Activated CD4-positive, alpha-beta T cell treated with anti-CD3 and anti-CD28 coated beads, Interleukin-2, amount 10 ng/mL, durations not matched to agents 7 days and 5 days (primary cell): ENCODE measurements at regions of chr12 and their contacts with region 1.

Region 1: GRCh38 chr12:65156366-65156841 is 13.0 kb upstream of the LEMD3 start:
- DNase-seq: peak; percentile 29
- H3K4me3 Mint-ChIP-seq: peak overlapping the region; percentile 48
- H3K27ac Mint-ChIP-seq: peak overlapping the region; percentile 86
- H3K4me1 Mint-ChIP-seq: peaks cover 20% of the 10 kb centered on the region
- H3K27me3 Mint-ChIP-seq: peaks cover 24% of the 10 kb centered on the region

Region 2: DNA sequence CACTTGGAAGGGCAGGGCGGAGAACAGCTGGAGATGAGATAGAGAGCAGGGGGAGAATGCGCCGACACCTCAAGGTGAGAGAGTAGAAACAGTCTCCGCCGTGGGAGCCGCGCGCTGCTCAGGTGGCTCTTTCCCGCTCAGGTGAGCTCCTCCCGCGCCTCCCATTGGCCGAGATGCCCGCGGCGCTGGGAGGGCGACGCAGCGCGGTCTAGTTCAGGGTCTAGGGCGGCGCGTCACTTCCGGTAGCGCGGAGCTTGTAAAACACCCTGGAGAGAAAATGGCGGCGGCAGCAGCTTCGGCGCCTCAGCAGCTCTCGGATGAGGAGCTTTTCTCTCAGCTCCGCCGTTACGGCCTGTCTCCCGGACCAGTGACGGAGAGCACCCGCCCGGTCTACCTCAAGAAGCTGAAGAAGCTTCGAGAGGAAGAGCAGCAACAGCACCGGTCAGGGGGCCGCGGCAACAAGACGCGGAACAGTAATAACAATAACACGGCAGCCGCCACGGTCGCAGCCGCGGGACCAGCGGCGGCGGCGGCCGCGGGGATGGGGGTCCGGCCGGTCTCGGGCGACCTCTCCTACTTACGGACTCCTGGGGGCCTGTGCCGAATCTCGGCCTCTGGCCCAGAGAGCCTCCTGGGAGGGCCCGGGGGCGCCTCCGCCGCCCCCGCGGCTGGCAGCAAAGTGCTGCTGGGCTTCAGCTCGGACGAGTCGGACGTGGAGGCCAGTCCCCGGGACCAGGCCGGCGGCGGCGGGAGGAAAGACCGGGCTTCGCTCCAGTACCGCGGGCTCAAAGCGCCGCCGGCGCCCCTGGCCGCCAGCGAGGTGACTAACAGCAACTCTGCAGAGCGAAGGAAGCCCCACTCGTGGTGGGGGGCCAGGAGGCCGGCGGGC is 13.2 kb after region 1 on chr12 and contains the start of gene LEMD3:
- CTCF ChIA-PET with region 1: interaction called, 23 read pairs
- POLR2A ChIA-PET with region 1: interaction called, 25 read pairs
- DNase-seq: peak; percentile 96
- H3K4me3 Mint-ChIP-seq: peak within 1 kb of the TSS; percentile 89
- H3K27ac Mint-ChIP-seq: peak within 1 kb of the TSS; percentile 99
- H3K4me1 Mint-ChIP-seq: peaks cover 35% of the 10 kb centered on the region
- H3K27me3 Mint-ChIP-seq: no peaks in the 10 kb centered on the region
- total RNA-seq, gene LEMD3: 28.5 to 30.9 TPM